ENCODE measurements at regions of chr15 and their contacts with region 1.

Region 1: GRCh38 chr15:89177633-89178306 is 43.6 kb downstream of the RLBP1 start:
- DNase-seq: peak; percentile 54
- ATAC-seq: peak; percentile 34 to 58
- H3K4me3 ChIP-seq: no peak overlapping the region
- H3K27ac ChIP-seq: no peak overlapping the region
- H3K4me1 ChIP-seq: peaks cover 5% of the 10 kb centered on the region
- H3K27me3 ChIP-seq: no peaks in the 10 kb centered on the region
- CTCF ChIP-seq: peak; percentile 81

Region 2: DNA sequence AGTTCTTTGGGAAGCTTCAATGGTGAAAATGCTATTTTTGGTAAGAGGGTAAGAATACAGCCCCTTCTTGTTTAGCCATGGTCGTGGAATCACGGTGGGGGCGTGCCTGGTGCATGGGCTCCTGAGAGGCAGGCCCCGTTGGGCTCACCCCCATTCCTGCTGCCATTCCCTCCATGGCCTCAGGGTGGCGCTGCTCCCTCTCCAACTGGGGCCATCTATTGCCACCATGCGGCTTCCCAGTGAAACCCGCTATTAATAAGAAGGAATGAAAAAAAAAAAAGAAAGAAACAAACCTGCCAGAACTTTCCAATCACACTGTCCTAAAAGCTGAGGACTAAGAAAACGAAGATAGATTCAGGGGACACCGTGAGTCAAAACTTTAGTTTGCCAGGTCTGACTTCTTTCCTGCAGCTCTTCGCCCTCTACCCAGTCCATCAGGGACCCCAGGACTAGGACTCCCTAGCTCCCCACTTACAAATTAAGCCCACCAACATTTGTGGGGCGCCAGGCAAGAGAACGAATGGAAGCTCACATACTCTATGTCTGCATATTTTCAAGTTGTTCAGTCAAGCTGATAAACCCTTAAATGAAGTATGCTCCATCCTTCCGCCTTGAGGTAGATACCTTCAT is 120.2 kb before region 1 on chr15:
- intact Hi-C with region 1: loop called (anchors 10 kb)
- DNase-seq: peak; percentile 88
- ATAC-seq: peak; percentile 96 to 97
- H3K4me3 ChIP-seq: no peak overlapping the region
- H3K27ac ChIP-seq: no peak overlapping the region
- H3K4me1 ChIP-seq: peaks cover 6% of the 10 kb centered on the region
- H3K27me3 ChIP-seq: no peaks in the 10 kb centered on the region
- CTCF ChIP-seq: peak; percentile 98

Region 3: DNA sequence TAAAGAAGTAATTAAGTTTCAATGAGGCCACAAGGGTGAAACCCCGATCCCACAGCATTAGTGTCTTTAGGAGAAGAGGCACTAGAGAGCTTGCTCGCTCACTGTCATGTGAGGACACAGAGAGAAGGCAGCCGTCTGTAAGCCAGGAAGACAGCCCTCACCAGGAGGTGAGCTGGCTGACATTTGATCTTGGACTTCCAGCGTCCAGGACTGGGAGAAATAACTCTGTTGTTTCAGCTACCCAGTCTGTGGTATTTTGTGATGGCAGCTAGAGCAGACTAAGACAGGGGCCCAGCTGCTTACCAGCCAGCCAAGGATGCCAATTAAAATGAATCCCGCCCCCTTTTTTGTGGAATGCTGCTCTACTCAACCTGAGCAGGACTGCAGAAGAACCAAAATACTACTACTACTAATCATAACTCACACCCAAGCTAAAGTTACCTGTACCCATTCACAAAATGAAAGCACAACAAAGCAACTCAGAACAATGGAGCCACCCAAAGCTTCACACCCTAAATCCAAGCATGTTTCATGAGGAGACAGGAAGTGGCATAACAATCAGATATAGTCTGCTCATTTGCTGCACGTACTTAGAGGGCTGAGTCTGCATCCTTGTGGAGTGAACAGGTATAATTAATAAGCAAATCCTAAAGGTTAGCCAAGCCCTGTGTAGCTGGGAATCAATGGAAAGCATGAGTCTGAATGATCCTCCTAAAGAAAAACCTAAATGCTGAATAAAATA is 354.2 kb after region 1 on chr15:
- intact Hi-C with region 1: no loop called
- DNase-seq: no peak
- ATAC-seq: no peak
- H3K4me3 ChIP-seq: no peak overlapping the region
- H3K27ac ChIP-seq: no peak overlapping the region
- H3K4me1 ChIP-seq: no peaks in the 10 kb centered on the region
- H3K27me3 ChIP-seq: no peaks in the 10 kb centered on the region
- CTCF ChIP-seq: no peak

Measured in lower lobe of right lung (tissue), 2 donors.